Mammary epithelial cell (primary cell): ENCODE measurements at regions of chr17 and their contacts with region 1.

Region 1: GRCh38 chr17:63919311-63919723 is 678 bp upstream of the GH1 start:
- DNase-seq: peak; percentile 38
- H3K4me3 ChIP-seq: no peak overlapping the region
- H3K27ac ChIP-seq: no peak overlapping the region
- H3K4me1 ChIP-seq: no peaks in the 10 kb centered on the region
- H3K27me3 ChIP-seq: no peaks in the 10 kb centered on the region
- CTCF ChIP-seq: peak; percentile 66 to 92

Region 2: GRCh38 chr17:63931099-63931561 is 11.8 kb after region 1 on chr17:
- CTCF ChIA-PET with region 1: no interaction called
- dilution Hi-C with region 1: no loop called
- in situ Hi-C with region 1: no loop called
- intact Hi-C with region 1: no loop called
- DNase-seq: no peak
- H3K4me3 ChIP-seq: no peak overlapping the region
- H3K27ac ChIP-seq: no peak overlapping the region
- H3K4me1 ChIP-seq: peaks cover 18% of the 10 kb centered on the region
- H3K27me3 ChIP-seq: no peaks in the 10 kb centered on the region
- CTCF ChIP-seq: no peak

Region 3: GRCh38 chr17:63946440-63947367 is 27.4 kb after region 1 on chr17:
- CTCF ChIA-PET with region 1: interaction called, 26 read pairs
- dilution Hi-C with region 1: no loop called
- in situ Hi-C with region 1: no loop called
- intact Hi-C with region 1: loop called (anchors 1 kb)
- DNase-seq: no peak
- H3K4me3 ChIP-seq: no peak overlapping the region
- H3K27ac ChIP-seq: no peak overlapping the region
- H3K4me1 ChIP-seq: no peaks in the 10 kb centered on the region
- H3K27me3 ChIP-seq: no peaks in the 10 kb centered on the region
- CTCF ChIP-seq: peak; percentile 45 to 73

Region 4: GRCh38 chr17:63984651-63985386 is 65.5 kb after region 1 on chr17:
- CTCF ChIA-PET with region 1: no interaction called
- dilution Hi-C with region 1: no loop called
- in situ Hi-C with region 1: no loop called
- intact Hi-C with region 1: loop called (anchors 1 kb)
- DNase-seq: peak; percentile 84
- H3K4me3 ChIP-seq: no peak overlapping the region
- H3K27ac ChIP-seq: no peak overlapping the region
- H3K4me1 ChIP-seq: peaks cover 20% of the 10 kb centered on the region
- H3K27me3 ChIP-seq: no peaks in the 10 kb centered on the region
- CTCF ChIP-seq: no peak

Region 5: GRCh38 chr17:64020056-64020766 is 100.9 kb after region 1 on chr17 and contains the start of gene ICAM2:
- CTCF ChIA-PET with region 1: interaction called, 4 read pairs
- dilution Hi-C with region 1: no loop called
- in situ Hi-C with region 1: loop called (anchors 5 to 10 kb)
- intact Hi-C with region 1: loop called (anchors 1 kb)
- DNase-seq: no peak
- H3K4me3 ChIP-seq: no peak within 1 kb of the TSS
- H3K27ac ChIP-seq: no peak within 1 kb of the TSS
- H3K4me1 ChIP-seq: no peaks in the 10 kb centered on the region
- H3K27me3 ChIP-seq: no peaks in the 10 kb centered on the region
- CTCF ChIP-seq: no peak
- total RNA-seq, gene ICAM2: 0.49 to 2.8 TPM

Region 6: DNA sequence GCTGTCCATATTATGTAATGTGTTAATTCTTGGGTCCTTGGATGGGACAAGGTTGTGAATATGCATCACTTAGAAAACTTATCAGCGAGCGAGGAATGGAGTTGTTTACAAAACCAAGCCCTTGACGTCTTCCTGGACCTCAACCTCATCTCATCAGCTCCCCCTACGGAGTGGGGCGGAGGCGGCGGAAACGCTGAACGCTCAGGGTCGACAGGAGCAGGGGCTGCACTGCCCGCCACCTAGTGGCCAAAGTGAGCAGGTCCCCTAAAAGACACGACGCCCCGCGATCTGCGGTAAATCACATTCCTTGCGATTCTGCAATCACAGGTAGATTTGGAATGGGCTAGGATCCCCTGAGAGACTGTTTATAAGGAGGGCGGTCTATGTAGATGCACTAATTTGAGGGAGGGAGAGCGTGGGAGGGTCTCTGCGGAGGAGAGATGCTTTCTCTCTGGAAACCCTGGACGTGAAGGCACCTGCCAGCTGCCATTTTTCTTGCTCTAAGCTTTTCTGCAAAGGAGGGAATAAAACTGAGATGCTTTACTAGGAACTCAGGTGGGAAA is 106.5 kb after region 1 on chr17:
- CTCF ChIA-PET with region 1: interaction called, 8 read pairs
- dilution Hi-C with region 1: no loop called
- in situ Hi-C with region 1: loop called (anchors 5 to 10 kb)
- intact Hi-C with region 1: loop called (anchors 1 kb)
- DNase-seq: peak; percentile 51
- H3K4me3 ChIP-seq: peak overlapping the region in 1 of 3 experiments; percentile 15
- H3K27ac ChIP-seq: no peak overlapping the region
- H3K4me1 ChIP-seq: no peaks in the 10 kb centered on the region
- H3K27me3 ChIP-seq: no peaks in the 10 kb centered on the region
- CTCF ChIP-seq: peak; percentile 91 to 93

Region 7: DNA sequence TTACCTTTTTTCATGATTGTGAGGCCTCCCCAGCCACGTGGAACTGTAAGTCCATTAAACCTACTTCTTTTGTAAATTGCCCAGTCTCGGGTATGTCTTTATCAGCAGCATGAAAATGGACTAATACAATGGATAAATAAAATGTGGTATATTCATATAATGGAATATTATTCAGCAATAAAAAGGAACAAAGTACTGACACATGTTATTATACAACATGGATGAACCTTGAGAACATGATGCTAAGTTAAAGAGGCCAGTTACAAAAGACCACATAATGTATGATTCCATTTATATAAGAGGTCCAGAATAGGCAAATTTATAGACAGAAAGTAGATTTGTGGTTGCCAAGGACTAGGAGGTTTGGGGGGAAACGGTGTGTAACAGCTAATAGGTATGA is 205.3 kb after region 1 on chr17:
- CTCF ChIA-PET with region 1: no interaction called
- dilution Hi-C with region 1: no loop called
- in situ Hi-C with region 1: no loop called
- intact Hi-C with region 1: no loop called
- DNase-seq: no peak
- H3K4me3 ChIP-seq: no peak overlapping the region
- H3K27ac ChIP-seq: no peak overlapping the region
- H3K4me1 ChIP-seq: peaks cover 12% of the 10 kb centered on the region
- H3K27me3 ChIP-seq: no peaks in the 10 kb centered on the region
- CTCF ChIP-seq: no peak